ENCODE measurements at regions of chr14 and their contacts with region 1.

Region 1: GRCh38 chr14:50099335-50099734 is 17.0 kb downstream of the VCPKMT start:
- DNase-seq: no peak
- CTCF ChIP-seq: no peak

Region 2: GRCh38 chr14:49879683-49880204 is 219.6 kb before region 1 on chr14:
- in situ Hi-C with region 1: loop called (anchors 10 kb)
- DNase-seq: peak; percentile 56
- CTCF ChIP-seq: peak; percentile 72

Region 3: GRCh38 chr14:50045039-50045711 is 54.2 kb before region 1 on chr14:
- in situ Hi-C with region 1: loop called (anchors 10 kb)
- DNase-seq: peak; percentile 60
- CTCF ChIP-seq: no peak

Region 4: DNA sequence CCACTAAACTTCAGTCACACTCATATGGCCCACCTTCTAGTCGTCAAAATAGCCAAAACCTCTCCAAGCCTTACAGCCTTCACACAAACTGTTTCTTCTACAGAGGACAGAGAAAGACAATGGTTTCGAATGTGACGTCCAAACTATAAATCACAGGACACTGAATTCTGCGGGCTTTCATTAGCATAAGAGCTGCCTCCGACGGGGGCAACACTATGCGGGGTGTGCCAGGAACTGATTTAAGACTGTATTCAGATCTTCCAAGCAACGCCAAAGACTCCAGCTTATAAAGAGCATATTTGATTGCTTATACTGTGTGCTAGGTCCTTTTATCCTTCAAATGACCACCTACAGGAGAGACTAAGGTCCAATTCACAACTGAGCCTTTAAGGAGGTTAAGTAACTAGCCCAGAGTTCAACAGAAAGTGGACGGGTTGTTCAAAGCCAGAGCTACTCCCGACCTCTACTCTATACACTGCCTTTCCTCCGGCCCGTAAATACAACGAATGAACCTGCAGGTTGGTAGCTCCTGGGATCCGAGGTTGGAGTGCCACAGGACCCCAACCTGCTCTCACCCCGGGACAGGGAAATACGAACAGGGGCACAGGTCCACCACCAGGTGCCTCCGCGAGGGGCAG is 212.1 kb after region 1 on chr14:
- in situ Hi-C with region 1: no loop called
- DNase-seq: peak; percentile 24
- CTCF ChIP-seq: peak; percentile 54

Measured in GM13977 (cell line).